ENCODE measurements at regions of chr11 and their contacts with region 1.

Region 1: GRCh38 chr11:17711836-17712235 is 7.5 kb upstream of the MYOD1 start:
- DNase-seq: no peak
- H3K4me3 ChIP-seq: no peak overlapping the region
- H3K4me3 Mint-ChIP-seq: no peak overlapping the region
- H3K27ac Mint-ChIP-seq: no peak overlapping the region
- H3K4me1 ChIP-seq: no peaks in the 10 kb centered on the region
- H3K4me1 Mint-ChIP-seq: no peaks in the 10 kb centered on the region
- H3K27me3 ChIP-seq: peaks cover 4% of the 10 kb centered on the region
- H3K27me3 Mint-ChIP-seq: peaks cover 6% of the 10 kb centered on the region
- CTCF ChIP-seq: no peak

Region 2: DNA sequence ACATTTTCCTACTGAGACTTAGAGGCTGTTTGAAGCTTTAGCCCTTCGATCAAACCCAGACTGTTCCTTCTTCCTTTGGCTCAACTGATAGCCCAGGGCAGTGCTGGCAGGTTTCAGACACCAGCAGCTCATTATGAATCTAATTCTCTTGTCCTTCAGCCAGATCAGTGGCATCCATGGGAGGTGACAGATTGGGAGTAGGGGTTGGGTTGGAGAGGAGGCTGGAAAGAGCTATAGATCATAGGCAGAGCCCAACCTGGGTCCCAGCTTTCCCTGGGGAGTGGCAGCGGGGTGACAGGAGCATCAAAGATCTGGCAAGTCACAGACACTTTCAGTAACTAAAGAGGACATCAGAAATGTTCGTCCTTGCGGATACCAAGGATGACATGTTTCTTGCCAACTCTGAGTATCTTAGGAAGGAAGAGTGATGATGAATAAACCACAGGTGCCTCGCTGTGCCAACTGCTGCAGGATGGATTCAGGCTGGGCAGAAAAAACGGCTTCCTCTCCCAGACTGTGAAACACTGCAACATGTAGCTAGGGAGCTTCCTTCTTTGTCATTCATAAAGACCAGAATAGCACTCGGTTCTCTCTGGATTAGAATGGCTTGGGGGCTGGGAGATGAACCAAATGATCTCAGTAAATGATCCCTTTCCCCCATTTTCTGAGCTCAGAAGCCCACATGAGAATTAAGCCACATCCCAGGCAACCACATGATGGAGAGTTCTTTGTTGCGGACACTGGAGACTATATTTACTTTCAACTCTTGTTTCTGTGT is 254.3 kb before region 1 on chr11:
- CTCF ChIA-PET with region 1: no interaction called
- POLR2A ChIA-PET with region 1: no interaction called
- intact Hi-C with region 1: no loop called
- DNase-seq: no peak
- H3K4me3 ChIP-seq: no peak overlapping the region
- H3K4me3 Mint-ChIP-seq: no peak overlapping the region
- H3K27ac Mint-ChIP-seq: no peak overlapping the region
- H3K4me1 ChIP-seq: no peaks in the 10 kb centered on the region
- H3K4me1 Mint-ChIP-seq: no peaks in the 10 kb centered on the region
- H3K27me3 ChIP-seq: peaks cover 2% of the 10 kb centered on the region
- H3K27me3 Mint-ChIP-seq: peaks cover 15% of the 10 kb centered on the region
- CTCF ChIP-seq: no peak

Region 3: GRCh38 chr11:17699147-17700114 is 12.4 kb before region 1 on chr11:
- CTCF ChIA-PET with region 1: no interaction called
- POLR2A ChIA-PET with region 1: no interaction called
- intact Hi-C with region 1: loop called (anchors 1 kb)
- DNase-seq: no peak
- H3K4me3 ChIP-seq: no peak overlapping the region
- H3K4me3 Mint-ChIP-seq: no peak overlapping the region
- H3K27ac Mint-ChIP-seq: no peak overlapping the region
- H3K4me1 ChIP-seq: no peaks in the 10 kb centered on the region
- H3K4me1 Mint-ChIP-seq: no peaks in the 10 kb centered on the region
- H3K27me3 ChIP-seq: no peaks in the 10 kb centered on the region; the same call in 1 of the 2 replicates
- H3K27me3 Mint-ChIP-seq: peaks cover 9% of the 10 kb centered on the region
- CTCF ChIP-seq: no peak